OCI-LY7 (cell line): ENCODE measurements at regions of chr6 and their contacts with region 1.

Region 1: DNA sequence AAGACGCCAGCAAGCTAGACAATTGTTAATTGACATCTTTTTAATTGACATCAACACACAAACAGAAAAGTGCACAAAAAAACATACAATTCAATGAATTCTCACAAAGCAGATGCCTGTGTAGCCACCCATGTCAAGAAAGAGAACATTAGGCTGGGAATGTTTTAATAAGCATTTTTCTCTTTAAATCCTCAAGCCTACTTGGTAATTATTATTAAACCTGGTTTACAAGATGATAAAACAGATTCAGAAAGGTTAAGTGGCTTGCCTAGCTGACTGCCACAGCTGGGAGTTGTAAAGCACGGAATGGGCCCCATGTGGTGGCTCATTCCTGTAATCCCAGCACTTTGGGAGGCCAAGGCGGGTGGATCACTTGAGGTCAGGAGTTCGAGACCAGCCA is 90.0 kb upstream of the AKAP12 start:
- DNase-seq: no peak
- H3K4me3 ChIP-seq: no peak overlapping the region
- H3K27ac ChIP-seq: no peak overlapping the region
- H3K4me1 ChIP-seq: no peaks in the 10 kb centered on the region
- CTCF ChIP-seq: no peak

Region 2: DNA sequence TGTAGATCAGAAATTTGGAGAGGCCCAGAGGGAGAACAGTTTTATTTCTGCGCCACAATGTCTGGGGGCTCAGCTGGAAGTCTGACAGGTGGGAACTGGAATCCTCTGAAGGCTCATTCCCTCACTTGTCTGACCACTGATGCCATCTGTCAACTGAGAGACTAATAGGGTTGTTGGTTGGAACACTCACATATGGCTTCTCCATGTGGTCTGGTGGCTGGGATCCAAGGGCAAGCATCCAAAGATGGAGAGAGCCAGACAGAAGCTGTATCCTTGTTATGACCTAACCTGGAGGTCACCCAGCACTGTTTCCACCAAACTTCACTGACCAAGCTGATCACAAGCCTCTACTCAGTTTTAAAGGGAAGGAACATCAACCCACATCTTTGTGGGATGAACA is 27.9 kb before region 1 on chr6:
- CTCF ChIA-PET with region 1: no interaction called
- POLR2A ChIA-PET with region 1: no interaction called
- intact Hi-C with region 1: no loop called
- DNase-seq: no peak
- H3K4me3 ChIP-seq: no peak overlapping the region
- H3K27ac ChIP-seq: no peak overlapping the region
- H3K4me1 ChIP-seq: no peaks in the 10 kb centered on the region
- CTCF ChIP-seq: no peak

Region 3: GRCh38 chr6:151136141-151136755 is 13.5 kb before region 1 on chr6:
- CTCF ChIA-PET with region 1: no interaction called
- POLR2A ChIA-PET with region 1: no interaction called
- intact Hi-C with region 1: no loop called
- DNase-seq: no peak
- H3K4me3 ChIP-seq: no peak overlapping the region
- H3K27ac ChIP-seq: no peak overlapping the region
- H3K4me1 ChIP-seq: no peaks in the 10 kb centered on the region
- CTCF ChIP-seq: no peak

Region 4: GRCh38 chr6:151209071-151209831 is 59.5 kb after region 1 on chr6:
- CTCF ChIA-PET with region 1: no interaction called
- POLR2A ChIA-PET with region 1: interaction called, 12 read pairs
- intact Hi-C with region 1: no loop called
- DNase-seq: no peak
- H3K4me3 ChIP-seq: no peak overlapping the region
- H3K27ac ChIP-seq: no peak overlapping the region
- H3K4me1 ChIP-seq: no peaks in the 10 kb centered on the region
- CTCF ChIP-seq: no peak